PC-3 (cell line): ENCODE measurements at regions of chr5 and their contacts with region 1.

Region 1: GRCh38 chr5:180126726-180127681 is 55.4 kb upstream of the RNF130 start:
- DNase-seq: peak; percentile 30
- ATAC-seq: peak; percentile 65
- H3K4me3 ChIP-seq: 0 out of 2 replicates have a peak overlapping the region, but pooled peaks have one; percentile 21
- H3K27ac ChIP-seq: no peak overlapping the region
- H3K4me1 ChIP-seq: no peaks in the 10 kb centered on the region
- H3K27me3 ChIP-seq: no peaks in the 10 kb centered on the region
- CTCF ChIP-seq: peak; percentile 74

Region 2: DNA sequence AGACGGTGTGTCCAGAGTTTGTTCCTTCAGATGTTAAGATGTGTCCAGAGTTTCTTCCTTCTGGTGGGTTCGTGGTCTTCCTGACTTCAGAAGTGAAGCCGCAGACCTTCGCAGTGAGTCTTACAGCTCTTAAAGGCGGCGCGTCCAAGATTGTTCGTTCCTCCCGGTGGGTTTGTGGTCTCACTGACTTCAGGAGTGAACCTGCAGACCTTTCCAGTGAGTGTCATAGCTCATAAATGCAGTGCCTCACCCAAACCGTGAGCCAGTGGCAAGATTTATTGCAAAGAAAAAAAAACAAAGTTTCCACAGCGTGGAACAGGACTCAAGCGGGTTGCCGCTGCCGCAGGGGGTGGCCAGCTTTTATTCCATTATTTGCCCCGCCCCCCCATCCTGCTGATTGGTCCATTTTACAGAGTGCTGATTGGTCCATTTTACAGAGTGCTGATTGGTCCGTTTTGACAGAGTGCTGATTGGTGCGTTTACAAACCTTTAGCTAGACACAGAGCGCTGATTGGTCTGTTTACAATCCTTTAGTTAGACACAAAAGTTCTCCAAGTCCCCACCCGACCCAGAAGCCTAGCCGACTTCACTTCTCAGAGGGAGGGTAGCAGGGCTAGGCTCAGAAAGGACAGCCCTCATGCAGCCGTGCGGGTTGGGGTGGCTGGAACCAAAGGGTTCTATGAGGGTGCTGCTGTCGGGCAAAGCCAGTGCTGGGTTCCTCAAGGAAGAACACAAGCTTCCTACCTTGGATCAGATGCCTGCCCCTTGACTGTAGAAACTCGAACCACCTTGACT is 46.3 kb before region 1 on chr5:
- CTCF ChIA-PET with region 1: no interaction called
- POLR2A ChIA-PET with region 1: no interaction called
- intact Hi-C with region 1: no loop called
- DNase-seq: no peak
- ATAC-seq: no peak
- H3K4me3 ChIP-seq: no peak overlapping the region
- H3K27ac ChIP-seq: no peak overlapping the region
- H3K4me1 ChIP-seq: no peaks in the 10 kb centered on the region
- H3K27me3 ChIP-seq: no peaks in the 10 kb centered on the region; the same call in 1 of the 2 replicates
- CTCF ChIP-seq: no peak

Region 3: GRCh38 chr5:180155365-180155926 is 28.4 kb after region 1 on chr5:
- CTCF ChIA-PET with region 1: no interaction called
- POLR2A ChIA-PET with region 1: no interaction called
- intact Hi-C with region 1: no loop called
- DNase-seq: no peak
- ATAC-seq: no peak
- H3K4me3 ChIP-seq: no peak overlapping the region
- H3K27ac ChIP-seq: no peak overlapping the region
- H3K4me1 ChIP-seq: no peaks in the 10 kb centered on the region
- H3K27me3 ChIP-seq: no peaks in the 10 kb centered on the region
- CTCF ChIP-seq: no peak

Region 4: GRCh38 chr5:180209137-180209581 is 82.2 kb after region 1 on chr5 and contains the start of gene RASGEF1C:
- CTCF ChIA-PET with region 1: interaction called, 4 read pairs
- POLR2A ChIA-PET with region 1: no interaction called
- intact Hi-C with region 1: loop called (anchors 5 kb)
- DNase-seq: peak; percentile 74
- ATAC-seq: peak; percentile 79
- H3K4me3 ChIP-seq: peak within 1 kb of the TSS; percentile 58
- H3K27ac ChIP-seq: no peak within 1 kb of the TSS
- H3K4me1 ChIP-seq: peaks cover 11% of the 10 kb centered on the region
- H3K27me3 ChIP-seq: no peaks in the 10 kb centered on the region
- CTCF ChIP-seq: no peak
- total RNA-seq, gene RASGEF1C: 0.29 TPM in 1 of 2 replicates, not detected in the other

Region 5: DNA sequence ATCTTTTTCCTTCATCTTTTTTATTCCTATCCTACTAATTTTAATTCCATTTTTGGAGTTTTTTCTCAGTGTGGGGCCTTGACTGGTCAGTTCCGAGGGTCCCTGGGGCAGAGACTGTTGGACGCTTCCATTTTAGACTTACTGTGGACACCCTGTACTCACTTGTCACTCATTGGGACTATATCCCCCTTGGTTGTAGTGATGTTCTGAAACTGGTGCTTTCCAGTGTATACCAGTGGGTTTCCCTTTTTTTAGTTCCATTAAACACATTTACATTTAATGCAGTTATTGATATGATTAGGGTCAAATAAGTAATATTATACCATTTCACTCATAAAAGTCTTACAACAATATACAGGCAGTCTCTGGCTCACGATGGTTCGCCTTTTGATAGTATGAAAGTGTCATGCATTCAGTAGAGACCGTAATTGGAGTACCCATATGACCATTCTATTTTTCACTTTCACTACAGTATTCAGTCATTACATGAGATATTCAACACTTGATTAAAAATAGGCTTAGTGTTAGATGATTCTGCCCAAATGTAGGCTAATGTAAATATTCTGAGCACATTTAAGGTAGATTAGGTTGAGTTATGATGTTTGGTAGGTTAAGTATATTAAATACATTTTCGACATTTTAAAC is 413.2 kb after region 1 on chr5:
- CTCF ChIA-PET with region 1: no interaction called
- POLR2A ChIA-PET with region 1: no interaction called
- intact Hi-C with region 1: no loop called
- DNase-seq: no peak
- ATAC-seq: no peak
- H3K4me3 ChIP-seq: no peak overlapping the region
- H3K27ac ChIP-seq: no peak overlapping the region
- H3K4me1 ChIP-seq: no peaks in the 10 kb centered on the region
- H3K27me3 ChIP-seq: no peaks in the 10 kb centered on the region
- CTCF ChIP-seq: no peak